Activated CD8-positive, alpha-beta T cell treated with anti-CD3 and anti-CD28 coated beads, Interleukin-2, amount 10 ng/mL, durations not matched to agents 7 days and 5 days (primary cell): ENCODE measurements at regions of chr1 and their contacts with region 1.

Region 1: DNA sequence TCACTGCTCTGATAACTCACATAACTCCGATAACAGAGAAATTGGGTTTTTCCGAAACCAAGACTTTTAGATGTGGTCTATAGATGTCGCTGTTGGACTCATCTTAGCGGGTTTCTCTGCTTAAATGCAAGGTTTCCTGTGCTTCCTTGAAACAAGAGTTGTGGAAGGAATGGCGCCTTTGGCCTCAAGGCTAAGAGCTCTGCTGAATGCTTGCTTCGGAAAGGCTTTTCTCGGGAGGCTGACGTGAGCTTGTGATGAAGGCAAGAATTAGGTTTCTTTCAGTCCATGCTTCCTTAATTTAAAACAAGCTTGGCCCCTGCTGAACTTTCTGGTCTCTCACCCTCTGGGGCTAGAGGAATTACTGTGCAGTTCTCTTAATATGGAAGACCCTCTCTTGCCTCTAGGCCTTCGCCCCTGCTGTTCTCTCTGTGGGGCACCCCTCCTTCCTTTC is 113.5 kb downstream of the MAP3K21 start:
- DNase-seq: peak; percentile 22
- ATAC-seq: no peak
- H3K4me3 Mint-ChIP-seq: no peak overlapping the region
- H3K27ac Mint-ChIP-seq: no peak overlapping the region
- H3K4me1 Mint-ChIP-seq: no peaks in the 10 kb centered on the region
- H3K27me3 Mint-ChIP-seq: peaks cover 3% of the 10 kb centered on the region

Region 2: DNA sequence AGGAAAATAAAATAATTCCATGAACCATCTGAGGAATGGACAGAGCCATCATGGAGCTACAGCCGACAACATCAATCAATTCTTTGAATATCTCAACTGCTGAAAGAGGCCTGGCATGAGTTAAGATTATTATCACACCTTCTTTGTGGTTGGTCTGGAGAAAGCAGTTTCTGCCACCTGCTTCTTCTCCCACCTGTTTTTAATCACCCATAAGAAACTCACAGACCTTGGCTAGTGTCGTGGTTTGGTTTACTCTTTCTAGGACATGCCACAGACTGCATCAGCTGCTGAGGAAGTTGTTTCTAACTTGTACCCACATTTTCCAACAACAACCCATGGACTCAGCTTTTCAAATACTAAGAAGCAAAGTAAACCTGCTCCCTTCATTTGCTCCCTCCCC is 425.0 kb before region 1 on chr1:
- CTCF ChIA-PET with region 1: no interaction called
- POLR2A ChIA-PET with region 1: no interaction called
- DNase-seq: no peak
- ATAC-seq: peak; percentile 53
- H3K4me3 Mint-ChIP-seq: no peak overlapping the region
- H3K27ac Mint-ChIP-seq: no peak overlapping the region
- H3K4me1 Mint-ChIP-seq: peaks cover 15% of the 10 kb centered on the region
- H3K27me3 Mint-ChIP-seq: no peaks in the 10 kb centered on the region

Region 3: DNA sequence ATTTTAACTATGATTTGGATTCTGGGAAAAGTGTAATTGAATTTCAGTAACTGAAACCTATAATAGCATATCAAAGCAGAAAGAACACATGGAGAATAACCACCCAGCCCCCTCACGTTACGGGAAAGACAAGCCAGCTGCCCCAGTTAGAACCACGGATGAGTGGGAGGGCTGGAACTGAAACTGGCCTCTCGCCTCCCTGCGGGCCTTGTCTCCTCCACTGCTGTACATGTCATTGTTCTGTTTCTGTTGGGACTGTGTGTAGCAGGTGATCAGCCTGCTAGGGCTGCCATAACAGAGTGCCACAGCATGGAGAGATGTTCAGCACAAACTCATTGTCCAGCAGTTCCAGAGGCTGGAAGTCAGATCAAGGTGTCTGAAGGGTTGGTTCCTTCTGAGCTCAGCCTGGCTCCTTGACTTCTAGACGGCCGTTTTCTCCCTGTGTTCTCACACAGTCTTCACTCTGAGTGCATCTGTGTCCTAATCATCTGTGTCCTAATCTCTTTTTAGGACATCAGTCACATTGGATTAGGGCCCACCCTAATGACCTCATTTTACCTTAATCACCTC is 61.0 kb before region 1 on chr1:
- CTCF ChIA-PET with region 1: no interaction called
- POLR2A ChIA-PET with region 1: no interaction called
- DNase-seq: no peak
- ATAC-seq: no peak
- H3K4me3 Mint-ChIP-seq: no peak overlapping the region
- H3K27ac Mint-ChIP-seq: no peak overlapping the region
- H3K4me1 Mint-ChIP-seq: no peaks in the 10 kb centered on the region
- H3K27me3 Mint-ChIP-seq: peaks cover 3% of the 10 kb centered on the region

Region 4: DNA sequence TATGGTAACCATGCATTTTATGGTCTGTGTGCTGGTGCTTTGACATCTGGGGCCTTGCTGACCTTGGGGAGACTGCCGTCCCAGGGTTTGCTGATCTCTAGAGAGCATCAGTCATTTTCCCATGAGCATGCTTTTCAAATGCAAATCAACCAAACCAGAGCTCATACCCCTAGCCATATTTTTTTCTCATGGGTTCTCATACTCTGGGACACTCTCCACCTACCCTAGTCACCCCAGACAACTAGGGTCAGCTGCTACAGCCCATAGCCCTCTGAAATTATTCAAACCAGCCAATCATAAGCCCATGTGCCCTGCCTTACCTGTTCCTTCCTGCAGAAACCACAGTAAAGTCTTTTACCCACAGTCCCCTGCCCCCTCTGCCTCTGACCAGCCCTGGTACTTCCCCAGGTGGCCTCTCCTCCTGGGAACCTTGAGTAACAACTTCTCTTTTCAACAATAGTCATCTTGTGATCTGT is 18.5 kb after region 1 on chr1:
- CTCF ChIA-PET with region 1: no interaction called
- POLR2A ChIA-PET with region 1: no interaction called
- DNase-seq: no peak
- ATAC-seq: no peak
- H3K4me3 Mint-ChIP-seq: no peak overlapping the region
- H3K27ac Mint-ChIP-seq: no peak overlapping the region
- H3K4me1 Mint-ChIP-seq: peaks cover 5% of the 10 kb centered on the region
- H3K27me3 Mint-ChIP-seq: no peaks in the 10 kb centered on the region

Region 5: GRCh38 chr1:233790662-233791375 is 349.8 kb after region 1 on chr1:
- CTCF ChIA-PET with region 1: interaction called, 15 read pairs
- POLR2A ChIA-PET with region 1: no interaction called
- DNase-seq: peak; percentile 46
- ATAC-seq: peak; percentile 78
- H3K4me3 Mint-ChIP-seq: no peak overlapping the region
- H3K27ac Mint-ChIP-seq: no peak overlapping the region
- H3K4me1 Mint-ChIP-seq: no peaks in the 10 kb centered on the region
- H3K27me3 Mint-ChIP-seq: no peaks in the 10 kb centered on the region